CD4-positive, alpha-beta memory T cell (primary cell): ENCODE measurements at regions of chr17 and their contacts with region 1.

Region 1: GRCh38 chr17:46193626-46194392 is 580 bp upstream of the KANSL1 start:
- DNase-seq: peak; percentile 89 to 97 (median 94)
- H3K4me3 ChIP-seq: peak overlapping the region; percentile 40 to 93
- H3K4me3 Mint-ChIP-seq: peak overlapping the region; percentile 74 to 89 (median 86)
- H3K27ac ChIP-seq: peak overlapping the region; percentile 94
- H3K27ac Mint-ChIP-seq: peak overlapping the region; percentile 88 to 99 (median 98)
- H3K4me1 ChIP-seq: peaks cover 65% of the 10 kb centered on the region
- H3K4me1 Mint-ChIP-seq: peaks cover 35 to 80% (median 55%) of the 10 kb centered on the region in 4 donors
- H3K27me3 ChIP-seq: no peaks in the 10 kb centered on the region
- H3K27me3 Mint-ChIP-seq: no peaks in the 10 kb centered on the region

Region 2: GRCh38 chr17:46002311-46002972 is 191.4 kb before region 1 on chr17:
- CTCF ChIA-PET with region 1: interaction called, 8 read pairs
- POLR2A ChIA-PET with region 1: interaction called, 8 read pairs
- intact Hi-C with region 1: loop called (anchors 5 kb)
- DNase-seq: peak; percentile 67 to 78 (median 72)
- H3K4me3 ChIP-seq: no peak overlapping the region
- H3K4me3 Mint-ChIP-seq: no peak overlapping the region
- H3K27ac ChIP-seq: no peak overlapping the region
- H3K27ac Mint-ChIP-seq: no peak overlapping the region
- H3K4me1 ChIP-seq: peaks cover 5% of the 10 kb centered on the region
- H3K4me1 Mint-ChIP-seq: no peaks in the 10 kb centered on the region
- H3K27me3 ChIP-seq: no peaks in the 10 kb centered on the region
- H3K27me3 Mint-ChIP-seq: peaks cover 0 to 2% of the 10 kb centered on the region in 2 donors

Region 3: DNA sequence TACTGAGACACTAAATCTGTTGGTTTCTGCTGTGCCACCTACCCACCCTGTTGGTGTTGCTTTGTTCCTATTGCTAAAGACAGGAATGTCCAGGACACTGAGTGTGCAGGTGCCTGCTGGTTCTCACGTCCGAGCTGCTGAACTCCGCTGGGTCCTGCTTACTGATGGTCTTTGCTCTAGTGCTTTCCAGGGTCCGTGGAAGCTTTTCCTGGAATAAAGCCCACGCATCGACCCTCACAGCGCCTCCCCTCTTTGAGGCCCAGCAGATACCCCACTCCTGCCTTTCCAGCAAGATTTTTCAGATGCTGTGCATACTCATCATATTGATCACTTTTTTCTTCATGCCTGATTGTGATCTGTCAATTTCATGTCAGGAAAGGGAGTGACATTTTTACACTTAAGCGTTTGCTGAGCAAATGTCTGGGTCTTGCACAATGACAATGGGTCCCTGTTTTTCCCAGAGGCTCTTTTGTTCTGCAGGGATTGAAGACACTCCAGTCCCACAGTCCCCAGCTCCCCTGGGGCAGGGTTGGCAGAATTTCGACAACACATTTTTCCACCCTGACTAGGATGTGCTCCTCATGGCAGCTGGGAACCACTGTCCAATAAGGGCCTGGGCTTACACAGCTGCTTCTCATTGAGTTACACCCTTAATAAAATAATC is 180.2 kb before region 1 on chr17:
- CTCF ChIA-PET with region 1: no interaction called
- POLR2A ChIA-PET with region 1: no interaction called
- intact Hi-C with region 1: no loop called
- DNase-seq: no peak
- H3K4me3 ChIP-seq: no peak overlapping the region
- H3K4me3 Mint-ChIP-seq: no peak overlapping the region
- H3K27ac ChIP-seq: no peak overlapping the region
- H3K27ac Mint-ChIP-seq: peak overlapping the region in 1 of 7 donors; percentile 43
- H3K4me1 ChIP-seq: peaks cover 9% of the 10 kb centered on the region
- H3K4me1 Mint-ChIP-seq: peaks cover 3 to 6% (median 5%) of the 10 kb centered on the region in 4 donors
- H3K27me3 ChIP-seq: no peaks in the 10 kb centered on the region
- H3K27me3 Mint-ChIP-seq: no peaks in the 10 kb centered on the region

Region 4: GRCh38 chr17:46044286-46044928 is 149.4 kb before region 1 on chr17:
- CTCF ChIA-PET with region 1: interaction called, 7 read pairs
- POLR2A ChIA-PET with region 1: interaction called, 19 read pairs
- intact Hi-C with region 1: loop called (anchors 1 kb)
- DNase-seq: peak; percentile 42 to 65 (median 50)
- H3K4me3 ChIP-seq: no peak overlapping the region
- H3K4me3 Mint-ChIP-seq: peak overlapping the region in 1 of 8 donors; percentile 13
- H3K27ac ChIP-seq: no peak overlapping the region
- H3K27ac Mint-ChIP-seq: peak overlapping the region; percentile 4 to 94 (median 69)
- H3K4me1 ChIP-seq: no peaks in the 10 kb centered on the region
- H3K4me1 Mint-ChIP-seq: peaks cover 9 to 18% (median 14%) of the 10 kb centered on the region in 4 donors
- H3K27me3 ChIP-seq: no peaks in the 10 kb centered on the region
- H3K27me3 Mint-ChIP-seq: no peaks in the 10 kb centered on the region

Region 5: GRCh38 chr17:46139432-46140210 is 54.2 kb before region 1 on chr17:
- CTCF ChIA-PET with region 1: interaction called, 14 read pairs
- POLR2A ChIA-PET with region 1: interaction called, 27 read pairs
- intact Hi-C with region 1: loop called (anchors 2 kb)
- DNase-seq: no peak
- H3K4me3 ChIP-seq: no peak overlapping the region
- H3K4me3 Mint-ChIP-seq: peak overlapping the region in 7 of 8 donors; percentile 6 to 70 (median 34)
- H3K27ac ChIP-seq: no peak overlapping the region
- H3K27ac Mint-ChIP-seq: peak overlapping the region in 5 of 7 donors; percentile 53 to 73 (median 59)
- H3K4me1 ChIP-seq: peaks cover 95% of the 10 kb centered on the region
- H3K4me1 Mint-ChIP-seq: peaks cover 75 to 98% (median 88%) of the 10 kb centered on the region in 4 donors
- H3K27me3 ChIP-seq: no peaks in the 10 kb centered on the region
- H3K27me3 Mint-ChIP-seq: no peaks in the 10 kb centered on the region

Region 6: DNA sequence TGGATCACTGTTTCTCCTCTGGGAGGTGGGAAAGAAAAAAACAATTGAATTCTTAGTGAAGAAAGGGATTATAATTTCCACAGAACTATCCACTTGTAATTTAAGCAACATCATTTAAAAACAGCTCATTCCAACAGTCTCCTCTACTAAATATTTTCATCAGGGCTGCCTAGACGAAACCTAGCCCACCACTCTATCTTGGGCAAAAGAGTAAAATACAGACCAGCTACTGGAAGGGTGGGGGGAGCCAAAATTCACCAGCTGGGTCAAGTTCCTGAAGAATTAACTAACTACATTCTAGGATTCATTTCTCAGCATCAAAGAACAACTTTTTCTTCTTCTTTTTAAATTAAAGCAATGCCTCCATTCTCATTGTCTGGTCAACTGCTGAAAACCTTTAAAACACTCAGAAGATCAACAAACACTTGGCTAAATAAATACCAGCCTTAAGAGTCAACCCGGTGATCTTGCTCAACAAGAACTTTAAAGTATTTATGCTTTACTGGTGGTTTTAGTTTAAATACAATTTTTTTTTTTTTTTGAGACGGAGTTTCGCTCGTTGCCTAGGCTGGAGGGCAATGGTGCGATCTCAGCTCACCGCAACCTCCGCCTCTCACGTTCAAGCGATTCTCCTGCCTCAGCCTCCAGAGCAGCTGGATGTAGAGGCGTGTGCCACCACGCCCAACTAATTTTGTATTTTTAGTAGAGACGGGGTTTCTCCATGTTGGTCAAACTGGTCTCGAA is 25.8 kb before region 1 on chr17:
- CTCF ChIA-PET with region 1: interaction called, 17 read pairs
- POLR2A ChIA-PET with region 1: interaction called, 13 read pairs
- intact Hi-C with region 1: loop called (anchors 2 kb)
- DNase-seq: no peak
- H3K4me3 ChIP-seq: no peak overlapping the region
- H3K4me3 Mint-ChIP-seq: peak overlapping the region in 5 of 8 donors; percentile 1 to 61 (median 26)
- H3K27ac ChIP-seq: no peak overlapping the region
- H3K27ac Mint-ChIP-seq: peak overlapping the region in 2 of 7 donors; percentile 2 to 10
- H3K4me1 ChIP-seq: peaks cover 95% of the 10 kb centered on the region
- H3K4me1 Mint-ChIP-seq: peaks cover 65 to 94% (median 80%) of the 10 kb centered on the region in 4 donors
- H3K27me3 ChIP-seq: no peaks in the 10 kb centered on the region
- H3K27me3 Mint-ChIP-seq: no peaks in the 10 kb centered on the region